ENCODE measurements at regions of chr5 and their contacts with region 1.

Region 1: DNA sequence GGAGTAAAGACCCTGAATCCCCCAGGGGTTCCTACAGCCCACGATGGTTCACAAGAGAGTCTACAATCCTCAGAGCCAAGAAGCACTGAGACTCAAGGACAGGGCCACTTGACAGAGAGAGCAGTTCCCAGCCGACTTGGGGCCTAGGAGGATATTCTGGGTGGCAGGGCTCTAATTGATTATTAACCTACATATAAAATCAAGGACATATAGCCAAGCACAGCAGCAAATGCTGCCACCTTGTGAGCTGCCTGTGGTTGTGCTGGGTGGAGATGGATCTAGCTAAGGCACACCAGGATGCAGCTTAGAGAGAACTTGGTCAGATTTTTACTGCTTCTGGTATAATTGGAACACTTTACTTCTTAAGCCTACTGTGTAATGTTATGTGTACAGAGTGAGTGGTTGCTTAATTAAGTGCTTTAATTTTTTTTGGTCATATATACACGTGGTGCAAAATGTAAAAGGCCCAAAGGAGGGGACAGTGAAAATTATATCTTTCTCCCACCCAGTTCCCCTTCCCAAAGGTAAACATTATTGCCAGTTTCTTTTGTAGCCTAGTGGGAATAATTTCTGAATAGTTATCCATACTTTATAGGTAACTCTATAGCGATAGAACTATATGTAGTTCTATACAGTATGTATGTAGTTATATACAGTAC is 78.8 kb downstream of the F2RL2 start:
- DNase-seq: peak in 8 of 9 donors; percentile 37 to 69 (median 58)
- ATAC-seq: peak; percentile 31
- H3K4me3 ChIP-seq: peak overlapping the region; percentile 33
- H3K4me3 Mint-ChIP-seq: peak overlapping the region; percentile 43 to 80 (median 74)
- H3K27ac ChIP-seq: peak overlapping the region; percentile 73
- H3K27ac Mint-ChIP-seq: peak overlapping the region; percentile 93 to 98 (median 96)
- H3K4me1 ChIP-seq: peaks cover 57 to 86% of the 10 kb centered on the region in 2 donors
- H3K4me1 Mint-ChIP-seq: peaks cover 64 to 89% (median 84%) of the 10 kb centered on the region in 7 donors
- H3K27me3 ChIP-seq: no peaks in the 10 kb centered on the region
- H3K27me3 Mint-ChIP-seq: no peaks in the 10 kb centered on the region

Region 2: GRCh38 chr5:75511435-75512384 is 1032.7 kb before region 1 on chr5 and contains the starts of genes CERT1 and POLK:
- CTCF ChIA-PET with region 1: no interaction called
- POLR2A ChIA-PET with region 1: no interaction called
- intact Hi-C with region 1: loop called (anchors 2 to 5 kb)
- DNase-seq: peak; percentile 70 to 94 (median 90)
- ATAC-seq: peak; percentile 95
- H3K4me3 ChIP-seq: peak within 1 kb of the TSS; percentile 78
- H3K4me3 Mint-ChIP-seq: peak within 1 kb of the TSS; percentile 89 to 97 (median 94)
- H3K27ac ChIP-seq: peak within 1 kb of the TSS; percentile 75
- H3K27ac Mint-ChIP-seq: peak within 1 kb of the TSS; percentile 84 to 98 (median 93)
- H3K4me1 ChIP-seq: peaks cover 14 to 28% of the 10 kb centered on the region in 2 donors
- H3K4me1 Mint-ChIP-seq: peaks cover 29 to 77% (median 54%) of the 10 kb centered on the region in 7 donors
- H3K27me3 ChIP-seq: no peaks in the 10 kb centered on the region
- H3K27me3 Mint-ChIP-seq: no peaks in the 10 kb centered on the region
- total RNA-seq, gene CERT1: 34.4 to 60.4 (median 39.3) TPM
- total RNA-seq, gene POLK: 20.6 to 36.6 (median 24.9) TPM

Region 3: GRCh38 chr5:76256116-76256889 is 288.1 kb before region 1 on chr5:
- CTCF ChIA-PET with region 1: no interaction called
- POLR2A ChIA-PET with region 1: no interaction called
- intact Hi-C with region 1: loop called (anchors 1 kb)
- DNase-seq: peak; percentile 20 to 70 (median 56)
- ATAC-seq: peak; percentile 96
- H3K4me3 ChIP-seq: no peak overlapping the region
- H3K4me3 Mint-ChIP-seq: peak overlapping the region in 4 of 10 donors; percentile 23 to 45 (median 42)
- H3K27ac ChIP-seq: no peak overlapping the region
- H3K27ac Mint-ChIP-seq: peak overlapping the region in 3 of 9 donors; percentile 8 to 23 (median 11)
- H3K4me1 ChIP-seq: no peaks in the 10 kb centered on the region
- H3K4me1 Mint-ChIP-seq: peaks cover 0 to 12% (median 3%) of the 10 kb centered on the region in 7 donors
- H3K27me3 ChIP-seq: no peaks in the 10 kb centered on the region
- H3K27me3 Mint-ChIP-seq: peaks cover 4 to 36% (median 4%) of the 10 kb centered on the region in 5 donors

Region 4: DNA sequence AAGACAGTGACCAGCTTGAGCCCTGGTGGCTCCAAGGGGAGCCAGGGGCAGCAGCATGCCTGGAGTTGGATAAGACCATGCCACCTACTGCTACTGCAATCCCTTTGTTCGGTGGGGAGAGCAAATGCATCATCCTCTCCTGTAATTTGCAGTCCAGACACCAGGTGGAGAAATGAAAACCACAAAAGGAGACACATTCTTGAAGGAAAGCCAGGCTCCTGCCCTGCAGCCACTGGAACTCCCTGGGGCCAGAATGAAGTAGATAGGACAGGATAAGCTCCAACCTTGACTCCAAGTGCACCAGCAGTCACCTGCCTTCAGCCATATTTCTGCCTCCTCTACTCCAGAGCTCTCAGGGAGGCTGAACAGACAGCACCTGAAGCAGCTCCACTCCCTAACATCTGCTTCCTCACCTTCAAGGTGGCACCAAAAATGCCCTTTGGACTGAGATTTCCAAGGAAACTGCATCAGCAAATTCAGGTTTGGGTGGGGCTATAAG is 206.4 kb before region 1 on chr5:
- CTCF ChIA-PET with region 1: interaction called, 9 read pairs
- POLR2A ChIA-PET with region 1: interaction called, 5 read pairs
- intact Hi-C with region 1: loop called in 1 of 2 experiments (anchors 1 kb)
- DNase-seq: peak in 7 of 9 donors; percentile 44 to 63 (median 55)
- ATAC-seq: peak; percentile 78
- H3K4me3 ChIP-seq: no peak overlapping the region
- H3K4me3 Mint-ChIP-seq: no peak overlapping the region
- H3K27ac ChIP-seq: no peak overlapping the region
- H3K27ac Mint-ChIP-seq: peak overlapping the region in 4 of 9 donors; percentile 10 to 40 (median 22)
- H3K4me1 ChIP-seq: peaks cover 8 to 15% of the 10 kb centered on the region in 2 donors
- H3K4me1 Mint-ChIP-seq: peaks cover 19 to 35% (median 26%) of the 10 kb centered on the region in 7 donors
- H3K27me3 ChIP-seq: no peaks in the 10 kb centered on the region
- H3K27me3 Mint-ChIP-seq: no peaks in the 10 kb centered on the region

Region 5: GRCh38 chr5:76556511-76557221 is 12.3 kb after region 1 on chr5:
- CTCF ChIA-PET with region 1: no interaction called
- POLR2A ChIA-PET with region 1: no interaction called
- intact Hi-C with region 1: loop called in 1 of 2 experiments (anchors 1 kb)
- DNase-seq: no peak
- ATAC-seq: peak; percentile 57
- H3K4me3 ChIP-seq: no peak overlapping the region
- H3K4me3 Mint-ChIP-seq: no peak overlapping the region
- H3K27ac ChIP-seq: no peak overlapping the region
- H3K27ac Mint-ChIP-seq: peak overlapping the region in 8 of 9 donors; percentile 10 to 69 (median 48)
- H3K4me1 ChIP-seq: peaks cover 0 to 20% of the 10 kb centered on the region in 2 donors
- H3K4me1 Mint-ChIP-seq: peaks cover 11 to 50% (median 35%) of the 10 kb centered on the region in 7 donors
- H3K27me3 ChIP-seq: no peaks in the 10 kb centered on the region
- H3K27me3 Mint-ChIP-seq: no peaks in the 10 kb centered on the region

Region 6: GRCh38 chr5:76771705-76772405 is 227.5 kb after region 1 on chr5:
- CTCF ChIA-PET with region 1: no interaction called
- POLR2A ChIA-PET with region 1: no interaction called
- intact Hi-C with region 1: loop called in 1 of 2 experiments (anchors 5 kb)
- DNase-seq: no peak
- ATAC-seq: no peak
- H3K4me3 ChIP-seq: no peak overlapping the region
- H3K4me3 Mint-ChIP-seq: no peak overlapping the region
- H3K27ac ChIP-seq: no peak overlapping the region
- H3K27ac Mint-ChIP-seq: peak overlapping the region in 2 of 9 donors; percentile 6 to 32
- H3K4me1 ChIP-seq: no peaks in the 10 kb centered on the region
- H3K4me1 Mint-ChIP-seq: peaks cover 0 to 7% (median 3%) of the 10 kb centered on the region in 7 donors
- H3K27me3 ChIP-seq: no peaks in the 10 kb centered on the region
- H3K27me3 Mint-ChIP-seq: peaks cover 0 to 4% (median 0%) of the 10 kb centered on the region in 5 donors